ENCODE measurements at regions of chr2 and their contacts with region 1.

Region 1: DNA sequence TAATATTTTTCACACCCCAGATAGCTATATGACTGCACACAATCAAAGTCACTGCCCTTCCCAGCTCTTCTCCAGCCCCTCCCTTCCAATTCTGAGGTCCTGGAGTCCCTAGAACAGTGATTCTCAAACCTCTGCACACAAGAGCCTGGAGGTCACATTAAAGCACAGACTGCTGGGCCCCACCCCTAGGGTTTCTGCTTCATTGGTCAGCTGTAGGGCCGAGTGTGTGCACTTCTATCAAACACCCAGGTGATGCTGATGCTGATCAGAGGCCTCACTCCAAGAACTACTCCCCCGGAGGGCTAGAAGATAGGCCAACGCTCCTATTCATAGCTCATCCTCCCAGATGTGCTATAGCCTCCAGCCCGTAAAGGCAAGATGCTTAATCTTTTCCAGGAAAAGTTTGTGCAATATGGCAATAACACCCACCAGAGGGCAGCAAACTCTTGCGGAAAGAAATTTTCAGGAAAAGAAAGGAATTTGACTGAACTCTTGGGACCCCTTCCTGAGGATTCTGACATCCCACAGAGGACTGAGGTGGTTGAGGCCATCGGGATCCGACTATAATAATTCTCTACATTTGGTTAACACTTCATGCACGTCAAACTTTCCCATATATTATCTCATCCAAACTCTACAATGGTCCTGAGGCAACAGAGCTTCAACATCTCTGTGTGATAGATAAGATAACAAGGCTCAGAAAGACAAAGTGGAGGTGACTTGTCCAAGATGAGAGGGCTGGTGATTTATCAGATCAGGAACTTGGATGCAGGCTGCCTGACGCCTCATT is 194.2 kb upstream of the PKDCC start:
- DNase-seq: peak; percentile 27
- H3K4me3 Mint-ChIP-seq: no peak overlapping the region
- H3K27ac Mint-ChIP-seq: no peak overlapping the region
- H3K4me1 Mint-ChIP-seq: peaks cover 17% of the 10 kb centered on the region
- H3K27me3 Mint-ChIP-seq: peaks cover 16% of the 10 kb centered on the region

Region 2: DNA sequence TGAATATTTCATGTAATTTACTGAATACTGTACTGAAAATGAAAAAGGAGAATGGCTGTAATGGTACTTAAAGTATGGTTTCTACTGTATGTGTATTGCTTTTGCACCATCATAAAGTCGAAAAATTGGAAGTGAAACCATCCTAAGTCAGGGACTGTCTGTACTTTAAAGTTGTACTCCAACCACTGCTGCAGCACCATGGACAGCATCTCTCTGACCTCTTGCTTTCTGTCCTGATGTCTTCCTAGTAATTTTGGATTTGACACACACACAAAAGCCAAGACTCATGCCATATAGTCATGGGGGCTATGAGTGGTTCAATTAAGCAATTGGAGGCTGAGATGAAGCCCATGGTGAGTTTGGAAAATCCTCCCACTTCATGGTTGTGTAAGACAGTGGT is 62.1 kb before region 1 on chr2:
- CTCF ChIA-PET with region 1: no interaction called
- intact Hi-C with region 1: no loop called
- DNase-seq: peak; percentile 46
- H3K4me3 Mint-ChIP-seq: no peak overlapping the region
- H3K27ac Mint-ChIP-seq: no peak overlapping the region
- H3K4me1 Mint-ChIP-seq: no peaks in the 10 kb centered on the region
- H3K27me3 Mint-ChIP-seq: peaks cover under 1% of the 10 kb centered on the region

Region 3: DNA sequence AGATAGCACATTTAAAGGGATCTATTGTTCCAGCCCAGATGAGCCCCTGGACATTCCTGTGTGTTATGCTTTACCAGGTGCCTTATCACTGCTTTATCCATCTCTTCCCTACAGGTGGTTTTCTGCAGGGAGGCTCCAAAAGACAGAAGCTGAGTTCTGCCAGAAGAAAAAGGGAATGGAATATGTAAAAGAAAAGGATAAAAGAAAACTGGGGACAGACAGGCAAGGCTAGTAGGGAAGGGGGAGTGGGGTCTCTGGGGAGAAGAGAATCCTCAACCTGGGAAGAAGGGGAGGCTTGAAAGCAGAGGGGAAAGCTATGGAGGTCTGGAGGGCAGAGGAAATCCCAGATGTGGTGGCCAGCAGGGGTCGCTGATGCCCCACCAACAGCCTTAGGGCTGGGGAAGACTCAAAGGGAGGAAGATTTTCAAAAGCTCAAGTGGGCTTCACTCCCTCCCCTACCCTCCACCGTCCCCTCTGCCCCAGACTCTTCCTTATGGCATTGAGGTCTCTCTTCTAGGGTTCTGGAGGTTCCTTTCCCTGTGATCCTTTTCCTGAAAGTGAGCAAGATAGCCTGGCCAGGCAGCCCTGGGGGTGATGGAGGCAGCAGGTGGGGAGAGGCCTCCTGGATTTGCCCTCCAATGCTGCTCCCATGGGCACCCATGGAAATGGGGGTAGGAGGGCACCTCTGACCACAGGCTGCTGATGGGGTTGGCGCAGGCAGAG is 16.1 kb after region 1 on chr2:
- CTCF ChIA-PET with region 1: interaction called, 70 read pairs
- intact Hi-C with region 1: loop called (anchors 1 kb)
- DNase-seq: peak; percentile 81
- H3K4me3 Mint-ChIP-seq: no peak overlapping the region
- H3K27ac Mint-ChIP-seq: no peak overlapping the region
- H3K4me1 Mint-ChIP-seq: no peaks in the 10 kb centered on the region
- H3K27me3 Mint-ChIP-seq: no peaks in the 10 kb centered on the region

Region 4: GRCh38 chr2:41990688-41991087 is 137.1 kb after region 1 on chr2:
- CTCF ChIA-PET with region 1: no interaction called
- intact Hi-C with region 1: no loop called
- DNase-seq: no peak
- H3K4me3 Mint-ChIP-seq: no peak overlapping the region
- H3K27ac Mint-ChIP-seq: no peak overlapping the region
- H3K4me1 Mint-ChIP-seq: no peaks in the 10 kb centered on the region
- H3K27me3 Mint-ChIP-seq: peaks cover 13% of the 10 kb centered on the region

Measured in activated naive CD4-positive, alpha-beta T cell treated with anti-CD3 and anti-CD28 coated beads for 36 hours (primary cell).